CD14-positive monocyte (primary cell): ENCODE measurements at regions of chr14 and their contacts with region 1.

Region 1: DNA sequence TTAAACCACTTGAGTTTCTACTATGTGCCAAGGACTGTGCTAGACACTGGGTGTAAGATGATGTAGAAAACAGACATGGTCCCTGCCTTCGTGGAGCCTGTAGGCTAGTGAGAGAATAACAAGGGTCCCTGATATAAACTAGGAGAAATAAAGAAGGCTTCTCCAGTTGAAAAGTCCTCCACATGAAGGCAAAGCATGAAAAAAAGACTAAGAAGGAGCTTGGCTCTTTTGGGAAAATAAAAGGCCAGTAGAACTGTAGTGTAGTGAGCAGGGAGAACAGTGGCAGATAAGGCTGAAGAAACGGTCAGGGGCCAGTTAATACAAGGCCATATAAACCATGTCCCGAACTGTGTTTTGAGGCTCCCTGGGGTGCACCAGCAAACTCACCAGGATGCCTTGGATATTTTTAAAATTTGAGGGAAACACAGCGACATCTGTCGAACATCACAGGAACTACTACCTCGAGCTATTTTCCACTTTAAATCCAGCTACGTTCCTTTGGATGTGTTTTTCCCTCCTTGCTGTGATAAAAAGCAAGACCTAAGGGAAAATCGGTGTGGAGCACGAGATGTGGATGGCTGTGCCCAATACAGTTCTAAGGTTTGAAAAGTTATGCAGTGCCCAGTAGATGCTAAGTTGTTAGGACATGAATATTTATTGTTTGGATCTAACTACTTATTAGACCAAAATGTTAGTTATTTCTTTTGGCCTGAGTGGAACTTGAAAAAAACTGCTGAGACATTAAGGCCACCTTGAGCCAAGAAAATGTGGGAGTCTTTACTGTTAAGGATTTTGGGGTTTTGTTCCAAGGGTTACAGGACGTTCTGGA is 8.5 kb upstream of the CFL2 start:
- DNase-seq: peak; percentile 15 to 39 (median 34)
- H3K4me3 ChIP-seq: no peak overlapping the region
- H3K4me3 Mint-ChIP-seq: no peak overlapping the region
- H3K27ac ChIP-seq: no peak overlapping the region
- H3K27ac Mint-ChIP-seq: no peak overlapping the region
- H3K4me1 ChIP-seq: no peaks in the 10 kb centered on the region
- H3K4me1 Mint-ChIP-seq: peaks cover 4% of the 10 kb centered on the region
- H3K27me3 ChIP-seq: peaks cover 0 to 2% of the 10 kb centered on the region in 2 donors
- H3K27me3 Mint-ChIP-seq: peaks cover 0 to 1% (median under 1%) of the 10 kb centered on the region in 3 donors
- CTCF ChIP-seq: peak; percentile 85

Region 2: GRCh38 chr14:34671716-34672115 is 51.2 kb before region 1 on chr14:
- intact Hi-C with region 1: loop called in 1 of 2 experiments (anchors 2 kb)
- DNase-seq: peak in 1 of 3 donors; percentile 14
- H3K4me3 ChIP-seq: no peak overlapping the region
- H3K4me3 Mint-ChIP-seq: no peak overlapping the region
- H3K27ac ChIP-seq: no peak overlapping the region
- H3K27ac Mint-ChIP-seq: peak overlapping the region in 4 of 7 donors; percentile 25 to 68 (median 54)
- H3K4me1 ChIP-seq: peaks cover 8 to 13% of the 10 kb centered on the region in 2 donors
- H3K4me1 Mint-ChIP-seq: peaks cover 12% of the 10 kb centered on the region
- H3K27me3 ChIP-seq: no peaks in the 10 kb centered on the region
- H3K27me3 Mint-ChIP-seq: peaks cover 0 to 6% (median 0%) of the 10 kb centered on the region in 3 donors
- CTCF ChIP-seq: no peak